ENCODE measurements at regions of chr5 and their contacts with region 1.

Region 1: GRCh38 chr5:156475182-156476157 is 148.5 kb downstream of the SGCD start:
- DNase-seq: peak in 4 of 5 donors; percentile 47 to 71 (median 56)
- ATAC-seq: peak; percentile 84 to 92 (median 84)
- H3K4me3 ChIP-seq: peak overlapping the region in 1 of 12 donors; percentile 20
- H3K27ac ChIP-seq: peak overlapping the region in 11 of 12 donors; percentile 12 to 72 (median 57)
- H3K4me1 ChIP-seq: peaks cover 0 to 55% (median 45%) of the 10 kb centered on the region in 12 donors
- H3K27me3 ChIP-seq: no peaks in the 10 kb centered on the region
- CTCF ChIP-seq: no peak
- POLR2A ChIP-seq: no peak

Region 2: GRCh38 chr5:155978850-155979249 is 496.6 kb before region 1 on chr5:
- intact Hi-C with region 1: no loop called
- DNase-seq: no peak
- ATAC-seq: peak; percentile 68 to 81 (median 76)
- H3K4me3 ChIP-seq: no peak overlapping the region
- H3K27ac ChIP-seq: no peak overlapping the region
- H3K4me1 ChIP-seq: peaks cover 0 to 26% (median 14%) of the 10 kb centered on the region in 12 donors
- H3K27me3 ChIP-seq: no peaks in the 10 kb centered on the region
- CTCF ChIP-seq: no peak
- POLR2A ChIP-seq: no peak

Region 3: GRCh38 chr5:156411185-156411613 is 64.3 kb before region 1 on chr5:
- intact Hi-C with region 1: loop called in 1 of 10 experiments (anchors 10 kb)
- DNase-seq: no peak
- ATAC-seq: peak; percentile 43 to 79 (median 70)
- H3K4me3 ChIP-seq: peak overlapping the region in 1 of 12 donors; percentile 20
- H3K27ac ChIP-seq: peak overlapping the region in 11 of 12 donors; percentile 5 to 73 (median 55)
- H3K4me1 ChIP-seq: peaks cover 0 to 48% (median 13%) of the 10 kb centered on the region in 12 donors
- H3K27me3 ChIP-seq: no peaks in the 10 kb centered on the region
- CTCF ChIP-seq: no peak
- POLR2A ChIP-seq: no peak

Region 4: GRCh38 chr5:156522651-156523529 is 47.4 kb after region 1 on chr5:
- intact Hi-C with region 1: no loop called
- DNase-seq: no peak
- ATAC-seq: no peak
- H3K4me3 ChIP-seq: no peak overlapping the region
- H3K27ac ChIP-seq: no peak overlapping the region
- H3K4me1 ChIP-seq: no peaks in the 10 kb centered on the region
- H3K27me3 ChIP-seq: no peaks in the 10 kb centered on the region
- CTCF ChIP-seq: no peak
- POLR2A ChIP-seq: no peak

Region 5: GRCh38 chr5:156534906-156535485 is 59.5 kb after region 1 on chr5:
- intact Hi-C with region 1: no loop called
- DNase-seq: no peak
- ATAC-seq: peak in 1 of 4 donors; percentile 70
- H3K4me3 ChIP-seq: no peak overlapping the region
- H3K27ac ChIP-seq: peak overlapping the region in 1 of 12 donors; percentile 11
- H3K4me1 ChIP-seq: peaks cover 0 to 11% (median 0%) of the 10 kb centered on the region in 12 donors
- H3K27me3 ChIP-seq: no peaks in the 10 kb centered on the region
- CTCF ChIP-seq: no peak
- POLR2A ChIP-seq: no peak

Region 6: DNA sequence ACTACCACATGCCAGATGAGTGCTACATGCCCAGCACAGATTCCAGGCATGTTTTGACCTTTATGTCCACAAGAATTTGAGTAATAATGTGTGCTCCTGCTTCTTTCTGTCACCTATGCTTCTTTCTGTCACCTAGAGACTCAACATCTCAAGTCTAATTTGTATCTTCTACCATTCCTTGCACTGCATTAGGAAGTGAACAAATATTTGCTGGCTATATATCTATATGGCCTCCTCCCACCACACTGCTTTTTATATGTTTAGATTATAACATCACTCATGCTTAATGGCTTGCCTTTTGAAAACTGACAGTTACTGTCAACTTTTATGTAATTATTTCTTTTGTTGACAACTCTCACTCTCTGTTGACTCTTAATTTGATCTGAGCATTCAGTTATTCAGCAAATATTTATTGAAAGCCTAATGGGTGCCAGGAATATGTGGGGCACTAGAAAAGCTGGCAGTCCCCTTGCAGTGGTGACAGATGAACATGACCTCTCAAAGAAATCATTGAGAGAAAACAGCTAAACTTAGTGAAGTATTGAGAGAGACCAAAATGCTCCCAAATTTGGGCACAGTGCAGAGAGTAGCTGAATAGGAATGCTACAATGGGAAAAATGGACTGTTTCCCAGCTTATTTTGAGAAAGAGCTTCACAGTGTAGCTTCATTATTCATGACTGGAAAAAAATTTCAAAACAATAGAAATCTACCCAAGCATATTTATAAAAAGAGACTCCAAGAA is 109.2 kb after region 1 on chr5:
- intact Hi-C with region 1: loop called in 1 of 10 experiments (anchors 10 kb)
- DNase-seq: peak in 2 of 5 donors; percentile 31 to 35
- ATAC-seq: peak; percentile 34 to 77 (median 47)
- H3K4me3 ChIP-seq: no peak overlapping the region
- H3K27ac ChIP-seq: peak overlapping the region; percentile 45 to 89 (median 82)
- H3K4me1 ChIP-seq: peaks cover 0 to 64% (median 11%) of the 10 kb centered on the region in 12 donors
- H3K27me3 ChIP-seq: no peaks in the 10 kb centered on the region
- CTCF ChIP-seq: no peak
- POLR2A ChIP-seq: no peak

Region 7: GRCh38 chr5:156722358-156722757 is 246.9 kb after region 1 on chr5:
- intact Hi-C with region 1: no loop called
- DNase-seq: no peak
- ATAC-seq: peak; percentile 38 to 68 (median 47)
- H3K4me3 ChIP-seq: no peak overlapping the region
- H3K27ac ChIP-seq: peak overlapping the region in 7 of 12 donors; percentile 1 to 51 (median 17)
- H3K4me1 ChIP-seq: peaks cover 0 to 21% (median 0%) of the 10 kb centered on the region in 12 donors
- H3K27me3 ChIP-seq: no peaks in the 10 kb centered on the region
- CTCF ChIP-seq: no peak
- POLR2A ChIP-seq: no peak